ENCODE measurements at regions of chr6 and their contacts with region 1.

Region 1: DNA sequence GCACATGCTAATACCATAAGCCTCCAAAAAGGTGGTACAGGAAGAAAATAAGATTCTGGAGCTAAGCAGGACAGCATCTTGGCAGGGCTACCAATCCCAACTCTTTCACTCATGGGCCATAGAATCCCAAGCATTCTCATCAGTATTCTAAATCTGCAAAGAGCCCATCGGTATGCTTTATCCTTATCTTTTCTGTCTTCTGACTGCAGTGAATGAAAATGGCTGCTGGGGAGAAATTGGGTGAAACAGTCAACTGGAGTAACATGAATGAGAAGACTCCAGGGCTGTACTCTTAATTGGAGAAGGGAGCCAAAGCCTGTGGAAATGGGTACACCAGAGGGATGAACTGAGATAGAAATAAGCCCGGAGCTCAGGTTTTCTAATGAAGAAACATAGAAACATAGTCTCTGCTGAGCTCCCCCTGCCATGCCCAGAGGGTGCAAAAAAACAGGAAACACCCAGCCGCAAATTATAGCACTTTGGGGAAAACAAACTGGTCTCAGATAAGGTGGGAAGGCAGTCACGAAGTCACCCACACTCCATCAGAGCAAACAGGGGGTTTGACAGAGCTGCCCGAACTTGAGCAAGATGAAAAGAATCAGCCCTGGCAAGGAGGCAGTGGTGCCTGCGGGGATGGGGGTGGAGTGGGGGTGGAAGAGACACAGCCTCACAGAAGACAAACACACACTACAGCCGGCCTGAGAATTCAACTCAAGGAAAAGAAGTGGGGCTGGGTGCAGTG is 35.4 kb upstream of the E2F3 start:
- DNase-seq: peak; percentile 43
- H3K4me3 Mint-ChIP-seq: peak overlapping the region; percentile 45
- H3K27ac Mint-ChIP-seq: peak overlapping the region; percentile 81
- H3K4me1 Mint-ChIP-seq: peaks cover 56% of the 10 kb centered on the region
- H3K27me3 Mint-ChIP-seq: no peaks in the 10 kb centered on the region

Region 2: DNA sequence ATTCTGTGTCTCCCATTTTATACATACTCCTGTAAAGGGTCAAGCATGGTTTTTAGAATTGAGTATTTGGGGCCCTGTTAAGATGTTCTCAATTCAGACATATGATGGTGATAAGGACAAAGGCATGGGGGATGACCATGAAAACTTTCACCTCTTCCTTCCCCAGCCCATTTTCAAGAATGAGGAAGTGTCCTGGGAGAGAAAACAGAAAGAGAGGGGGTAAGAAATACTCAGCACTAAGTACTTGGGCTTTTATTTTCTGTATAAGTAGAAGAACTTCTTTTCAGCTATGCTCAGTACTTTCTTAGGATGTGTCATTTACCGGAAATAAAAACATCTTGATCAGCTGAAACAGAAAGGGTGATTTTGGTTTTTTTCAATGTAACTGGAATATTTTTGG is 143.1 kb before region 1 on chr6:
- CTCF ChIA-PET with region 1: no interaction called
- intact Hi-C with region 1: no loop called
- DNase-seq: no peak
- H3K4me3 Mint-ChIP-seq: no peak overlapping the region
- H3K27ac Mint-ChIP-seq: no peak overlapping the region
- H3K4me1 Mint-ChIP-seq: no peaks in the 10 kb centered on the region
- H3K27me3 Mint-ChIP-seq: no peaks in the 10 kb centered on the region

Region 3: DNA sequence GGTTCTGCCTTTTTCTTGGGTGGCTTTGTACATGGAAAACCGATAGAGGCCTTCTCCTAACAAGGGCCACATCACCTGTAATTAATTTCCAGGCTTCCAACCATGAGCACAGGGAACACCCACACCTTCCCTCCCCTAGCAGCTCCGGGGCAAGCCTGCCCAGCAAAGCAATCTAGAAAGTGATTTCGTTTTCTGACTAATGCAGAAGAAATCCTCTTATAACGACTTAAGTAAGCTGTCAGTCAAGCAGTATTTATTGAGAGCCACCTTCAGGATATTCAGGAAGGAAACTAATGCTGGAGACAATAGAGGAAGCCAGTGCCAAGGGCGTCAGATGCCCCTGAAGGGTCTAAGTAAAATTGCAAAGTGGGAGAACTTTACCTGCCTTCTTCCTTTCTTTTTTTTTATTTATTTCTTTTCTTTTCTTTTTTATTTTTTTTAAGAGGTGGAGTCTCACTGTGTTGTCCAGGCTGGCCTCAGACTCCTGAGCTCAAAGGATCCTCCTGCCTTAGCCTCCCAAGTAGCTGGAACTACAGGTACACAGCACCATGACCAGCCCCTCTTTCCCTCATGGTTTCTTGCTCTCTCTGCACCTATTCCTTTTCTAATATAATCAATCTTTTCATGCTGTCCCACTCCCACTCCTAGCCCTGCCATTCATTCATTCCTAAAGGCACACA is 86.5 kb before region 1 on chr6:
- CTCF ChIA-PET with region 1: no interaction called
- intact Hi-C with region 1: no loop called
- DNase-seq: no peak
- H3K4me3 Mint-ChIP-seq: no peak overlapping the region
- H3K27ac Mint-ChIP-seq: no peak overlapping the region
- H3K4me1 Mint-ChIP-seq: peaks cover 4% of the 10 kb centered on the region
- H3K27me3 Mint-ChIP-seq: peaks cover 22% of the 10 kb centered on the region

Region 4: GRCh38 chr6:20319520-20320357 is 46.5 kb before region 1 on chr6:
- CTCF ChIA-PET with region 1: no interaction called
- intact Hi-C with region 1: loop called (anchors 1 kb)
- DNase-seq: peak; percentile 83
- H3K4me3 Mint-ChIP-seq: peak overlapping the region; percentile 81
- H3K27ac Mint-ChIP-seq: peak overlapping the region; percentile 96
- H3K4me1 Mint-ChIP-seq: peaks cover 14% of the 10 kb centered on the region
- H3K27me3 Mint-ChIP-seq: no peaks in the 10 kb centered on the region

Region 5: DNA sequence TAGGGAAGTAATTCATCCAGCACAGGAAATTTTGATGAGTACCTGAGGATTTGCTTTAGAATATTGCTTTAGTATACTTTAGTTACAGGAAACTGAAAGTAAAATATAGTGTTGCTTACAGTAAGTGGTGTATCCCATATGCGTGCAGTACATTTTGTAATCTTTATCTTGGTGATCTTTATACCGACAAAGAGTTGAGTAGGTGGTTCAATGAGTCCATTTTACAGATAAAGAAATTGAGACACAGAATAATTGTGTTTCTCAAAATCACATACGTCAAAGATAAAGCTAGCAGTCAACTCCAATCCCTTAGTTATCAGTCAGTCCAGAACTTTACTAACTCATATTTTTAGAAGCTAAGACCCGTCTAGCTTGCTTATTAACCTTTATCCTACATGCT is 30.4 kb before region 1 on chr6:
- CTCF ChIA-PET with region 1: no interaction called
- intact Hi-C with region 1: loop called (anchors 2 kb)
- DNase-seq: no peak
- H3K4me3 Mint-ChIP-seq: peak overlapping the region; percentile 71
- H3K27ac Mint-ChIP-seq: peak overlapping the region; percentile 79
- H3K4me1 Mint-ChIP-seq: peaks cover 15% of the 10 kb centered on the region
- H3K27me3 Mint-ChIP-seq: no peaks in the 10 kb centered on the region